Activated CD4-positive, alpha-beta memory T cell treated with anti-CD3 and anti-CD28 coated beads, Interleukin-2, amount 10 ng/mL, durations not matched to agents 7 days and 5 days (primary cell): ENCODE measurements at regions of chr3 and their contacts with region 1.

Region 1: DNA sequence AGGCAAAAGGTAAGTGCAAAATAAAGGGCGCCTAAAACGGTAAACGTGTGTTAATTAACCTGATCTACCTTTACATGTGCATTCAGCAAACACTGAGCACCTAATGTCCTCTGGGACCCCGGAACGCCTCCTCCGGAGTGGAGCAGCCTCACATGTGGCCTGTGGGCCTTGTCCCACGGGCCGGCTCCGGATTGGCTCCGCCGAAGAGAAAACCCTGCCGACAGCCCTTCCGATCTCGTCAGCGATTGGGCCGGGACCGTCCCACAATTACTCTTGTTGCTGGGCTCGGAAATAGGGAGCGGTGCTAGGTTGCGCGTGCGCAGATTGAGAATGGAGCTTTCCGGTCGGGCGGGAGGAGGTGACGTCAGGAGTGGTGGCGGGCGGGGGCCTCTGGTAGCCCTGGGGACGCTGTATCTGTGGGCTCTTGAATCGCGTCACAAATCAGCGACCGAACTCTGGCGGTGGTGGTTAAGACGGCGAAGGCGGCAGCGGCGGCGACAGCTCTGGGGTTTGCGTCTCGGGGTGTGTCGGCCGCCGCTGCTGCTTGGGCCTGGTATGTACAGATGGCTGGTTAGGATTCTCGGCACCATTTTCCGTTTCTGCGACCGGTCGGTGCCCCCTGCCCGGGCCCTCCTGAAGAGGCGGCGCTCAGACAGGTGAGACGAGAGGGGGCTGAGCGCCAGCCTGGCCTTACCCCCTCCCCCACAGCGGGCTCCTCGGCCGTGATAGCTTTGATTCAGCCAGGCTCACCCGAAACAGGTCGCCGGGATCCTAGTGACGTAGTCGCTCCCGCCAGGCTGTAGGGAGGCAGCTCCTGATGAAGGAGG is at the start of gene SENP2:
- DNase-seq: peak; percentile 100
- H3K4me3 Mint-ChIP-seq: peak within 1 kb of the TSS; percentile 78
- H3K27ac Mint-ChIP-seq: peak within 1 kb of the TSS; percentile 82
- H3K4me1 Mint-ChIP-seq: peaks cover 36% of the 10 kb centered on the region
- H3K27me3 Mint-ChIP-seq: no peaks in the 10 kb centered on the region
- total RNA-seq, gene SENP2: 32.8 to 33.6 TPM

Region 2: DNA sequence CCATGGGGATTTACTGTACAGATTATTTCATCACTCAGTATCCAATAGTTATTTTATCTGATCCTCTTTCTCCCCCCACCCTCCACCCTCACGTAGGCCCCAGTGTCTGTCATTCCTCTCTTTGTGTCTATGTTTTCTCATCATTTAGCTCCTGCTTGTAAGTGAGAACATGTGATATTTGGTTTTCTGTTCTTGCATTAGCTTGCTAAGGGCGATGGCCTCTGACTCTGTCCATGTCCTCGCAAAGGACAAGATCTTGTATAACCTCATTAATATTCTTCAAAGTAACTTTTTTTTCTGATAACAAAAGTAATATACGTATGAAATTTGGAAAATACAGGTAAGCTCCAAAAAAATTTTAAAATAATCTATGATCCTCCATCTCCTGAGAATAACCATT is 155.7 kb before region 1 on chr3:
- CTCF ChIA-PET with region 1: no interaction called
- POLR2A ChIA-PET with region 1: no interaction called
- DNase-seq: no peak
- H3K4me3 Mint-ChIP-seq: no peak overlapping the region
- H3K27ac Mint-ChIP-seq: no peak overlapping the region
- H3K4me1 Mint-ChIP-seq: no peaks in the 10 kb centered on the region
- H3K27me3 Mint-ChIP-seq: peaks cover 5% of the 10 kb centered on the region

Region 3: DNA sequence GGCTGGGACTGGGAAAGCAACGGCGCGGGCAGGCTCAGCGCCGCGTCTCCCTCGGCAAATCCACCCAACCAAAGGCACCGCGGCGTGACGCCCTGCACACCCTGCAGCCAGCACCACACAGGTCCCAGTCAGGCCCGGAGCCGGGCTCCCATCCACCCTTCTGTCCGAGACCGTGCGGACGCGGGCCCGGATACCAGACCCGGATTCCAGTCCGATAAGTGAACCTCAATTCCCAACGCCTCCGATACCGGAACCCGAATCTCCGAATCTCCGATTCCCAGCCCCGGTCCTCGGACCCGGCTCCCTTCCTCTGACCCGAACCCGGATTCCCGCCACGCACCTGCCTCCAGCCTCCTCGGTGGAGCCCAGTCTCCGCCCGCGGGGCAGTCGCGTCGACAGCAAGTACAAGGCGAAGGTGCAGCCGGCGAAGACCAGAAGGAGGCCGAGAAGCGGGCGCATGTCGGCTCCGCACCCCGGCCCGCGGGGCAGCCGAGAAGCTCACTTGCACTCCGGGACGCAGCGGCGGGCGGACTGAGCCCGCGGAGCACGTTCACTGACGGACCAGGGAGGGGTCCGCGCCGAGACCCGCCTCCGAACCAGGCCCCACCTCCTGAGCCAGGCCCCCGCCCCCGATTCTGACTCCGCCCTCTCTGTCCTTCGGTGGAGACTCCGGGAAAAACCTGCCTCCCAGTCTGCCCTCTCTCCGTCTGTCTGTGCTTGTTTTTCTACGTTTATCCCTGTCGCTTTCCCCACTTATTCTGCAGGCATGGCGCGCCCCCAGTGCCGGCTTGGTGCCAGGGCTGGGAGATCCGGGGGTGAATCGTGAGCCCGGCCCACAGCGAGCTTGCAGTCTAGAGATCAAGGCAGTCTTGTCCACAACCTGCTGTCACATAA is 87.3 kb before region 1 on chr3 and contains the start of gene TMEM41A:
- CTCF ChIA-PET with region 1: no interaction called
- POLR2A ChIA-PET with region 1: interaction called, 17 read pairs
- DNase-seq: peak; percentile 92
- H3K4me3 Mint-ChIP-seq: peak within 1 kb of the TSS; percentile 83
- H3K27ac Mint-ChIP-seq: peak within 1 kb of the TSS; percentile 82
- H3K4me1 Mint-ChIP-seq: peaks cover 21% of the 10 kb centered on the region
- H3K27me3 Mint-ChIP-seq: peaks cover 5% of the 10 kb centered on the region
- total RNA-seq, gene TMEM41A: 21.4 to 21.8 TPM

Region 4: GRCh38 chr3:185527364-185527763 is 58.7 kb before region 1 on chr3:
- CTCF ChIA-PET with region 1: no interaction called
- POLR2A ChIA-PET with region 1: no interaction called
- DNase-seq: no peak
- H3K4me3 Mint-ChIP-seq: no peak overlapping the region
- H3K27ac Mint-ChIP-seq: no peak overlapping the region
- H3K4me1 Mint-ChIP-seq: no peaks in the 10 kb centered on the region
- H3K27me3 Mint-ChIP-seq: peaks cover 11% of the 10 kb centered on the region

Region 5: DNA sequence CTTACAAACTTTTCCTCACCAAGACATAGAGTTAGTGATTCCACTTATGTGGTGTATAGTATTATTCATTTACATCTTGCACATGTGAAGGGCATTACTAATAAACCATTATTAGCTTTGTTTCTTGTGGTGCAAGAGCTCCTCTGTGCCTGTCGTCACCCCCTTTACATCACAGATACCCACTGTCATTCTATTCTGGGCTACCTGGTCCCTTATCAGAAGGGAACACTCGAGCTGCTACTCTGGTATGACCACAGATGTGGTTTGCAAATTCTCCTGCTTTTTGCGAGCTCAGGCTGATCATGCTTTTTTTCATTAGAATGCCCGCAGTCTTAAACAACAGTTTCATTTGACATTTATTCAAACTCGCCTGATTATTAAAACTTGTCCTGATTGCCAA is 13.9 kb before region 1 on chr3:
- CTCF ChIA-PET with region 1: interaction called, 24 read pairs
- POLR2A ChIA-PET with region 1: interaction called, 7 read pairs
- DNase-seq: no peak
- H3K4me3 Mint-ChIP-seq: no peak overlapping the region
- H3K27ac Mint-ChIP-seq: no peak overlapping the region
- H3K4me1 Mint-ChIP-seq: peaks cover 6% of the 10 kb centered on the region
- H3K27me3 Mint-ChIP-seq: peaks cover 3% of the 10 kb centered on the region

Region 6: DNA sequence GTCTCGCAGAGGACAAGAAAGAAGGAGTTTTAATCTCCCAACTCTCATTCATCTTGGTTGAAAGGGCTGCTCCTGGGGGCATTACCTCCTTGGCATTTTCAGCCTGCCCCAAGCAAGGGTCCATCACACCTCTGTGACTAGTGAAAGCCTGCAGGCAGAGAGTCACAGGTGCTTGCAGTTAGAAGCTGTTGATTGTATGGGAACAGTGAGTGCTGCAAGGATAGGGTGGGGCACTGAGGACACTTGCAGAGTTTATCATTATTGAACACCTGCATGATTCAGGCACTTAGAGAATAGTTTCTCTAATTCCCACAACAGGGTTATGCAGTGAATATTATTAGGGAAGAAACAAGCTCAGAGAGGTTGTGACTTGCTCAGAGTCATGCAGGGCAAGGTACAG is 280.5 kb after region 1 on chr3:
- CTCF ChIA-PET with region 1: no interaction called
- POLR2A ChIA-PET with region 1: no interaction called
- DNase-seq: no peak
- H3K4me3 Mint-ChIP-seq: no peak overlapping the region
- H3K27ac Mint-ChIP-seq: no peak overlapping the region
- H3K4me1 Mint-ChIP-seq: no peaks in the 10 kb centered on the region
- H3K27me3 Mint-ChIP-seq: peaks cover 23% of the 10 kb centered on the region